CD14-positive monocyte (primary cell): ENCODE measurements at regions of chr12 and their contacts with region 1.

Region 1: GRCh38 chr12:53995378-53996239 is 4.4 kb upstream of the HOXC9 start:
- DNase-seq: no peak
- H3K4me3 ChIP-seq: peak overlapping the region; percentile 32 to 78 (median 38)
- H3K4me3 Mint-ChIP-seq: peak overlapping the region; percentile 83 to 95
- H3K27ac ChIP-seq: no peak overlapping the region
- H3K27ac Mint-ChIP-seq: peak overlapping the region in 1 of 7 donors; percentile 20
- H3K4me1 ChIP-seq: peaks cover 15 to 30% of the 10 kb centered on the region in 2 donors
- H3K4me1 Mint-ChIP-seq: peaks cover 27% of the 10 kb centered on the region
- H3K27me3 ChIP-seq: peaks cover 92 to 100% of the 10 kb centered on the region in 2 donors
- H3K27me3 Mint-ChIP-seq: peaks cover 97 to 100% (median 100%) of the 10 kb centered on the region in 3 donors
- CTCF ChIP-seq: no peak

Region 2: DNA sequence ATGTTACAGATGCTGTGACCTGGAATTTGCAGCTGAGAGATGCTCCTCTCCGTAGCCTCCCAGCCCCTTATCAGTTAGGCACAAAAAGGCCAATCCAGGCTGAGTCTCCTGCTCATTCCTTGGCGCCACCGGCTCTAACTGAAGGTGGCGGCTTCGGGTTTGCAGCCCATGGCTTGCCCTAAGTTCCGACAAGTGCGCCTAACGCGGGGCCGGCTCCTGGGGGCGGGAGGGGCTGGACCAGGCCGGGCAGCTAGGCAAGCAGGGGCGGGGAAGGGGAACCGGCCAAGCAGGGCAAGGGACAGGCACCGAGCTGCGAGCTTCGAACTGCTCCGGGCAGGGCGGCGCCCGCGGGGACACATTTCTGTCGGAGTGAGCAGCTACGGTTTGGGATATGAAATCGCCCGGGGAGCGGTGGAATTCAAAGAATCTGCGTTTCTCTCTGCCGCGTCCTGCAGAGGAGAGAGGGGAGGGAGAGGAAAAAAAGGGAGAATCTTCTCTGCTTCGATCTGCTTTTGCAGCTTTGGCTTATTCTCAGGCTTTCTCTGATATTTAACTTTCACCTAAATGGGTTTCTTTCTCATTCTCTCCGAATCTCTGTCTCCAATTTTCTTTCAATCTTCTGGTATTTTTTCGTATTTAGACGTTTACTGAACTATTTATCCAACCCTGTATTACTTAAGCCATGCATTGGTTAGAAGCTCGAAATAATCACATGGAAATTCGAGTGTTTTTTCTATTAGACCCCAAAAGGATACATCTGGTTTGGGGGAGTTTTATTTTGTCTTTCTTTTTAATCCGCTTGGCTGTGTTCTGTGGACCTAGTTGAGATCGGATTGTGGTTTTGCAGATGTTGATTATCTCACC is 42.5 kb before region 1 on chr12:
- intact Hi-C with region 1: loop called in 1 of 2 experiments (anchors 5 kb)
- DNase-seq: no peak
- H3K4me3 ChIP-seq: no peak overlapping the region
- H3K4me3 Mint-ChIP-seq: peak overlapping the region in 1 of 2 donors; percentile 62
- H3K27ac ChIP-seq: no peak overlapping the region
- H3K27ac Mint-ChIP-seq: peak overlapping the region in 1 of 7 donors; percentile 31
- H3K4me1 ChIP-seq: no peaks in the 10 kb centered on the region
- H3K4me1 Mint-ChIP-seq: peaks cover 6% of the 10 kb centered on the region
- H3K27me3 ChIP-seq: peaks cover 92 to 99% of the 10 kb centered on the region in 2 donors
- H3K27me3 Mint-ChIP-seq: peaks cover 97 to 99% (median 97%) of the 10 kb centered on the region in 3 donors
- CTCF ChIP-seq: no peak

Region 3: GRCh38 chr12:54147186-54147585 is 151.6 kb after region 1 on chr12:
- intact Hi-C with region 1: no loop called
- DNase-seq: no peak
- H3K4me3 ChIP-seq: no peak overlapping the region
- H3K4me3 Mint-ChIP-seq: peak overlapping the region in 1 of 2 donors; percentile 18
- H3K27ac ChIP-seq: no peak overlapping the region
- H3K27ac Mint-ChIP-seq: no peak overlapping the region
- H3K4me1 ChIP-seq: no peaks in the 10 kb centered on the region
- H3K4me1 Mint-ChIP-seq: no peaks in the 10 kb centered on the region
- H3K27me3 ChIP-seq: peaks cover 0 to 73% of the 10 kb centered on the region in 2 donors
- H3K27me3 Mint-ChIP-seq: peaks cover 44 to 80% (median 57%) of the 10 kb centered on the region in 3 donors
- CTCF ChIP-seq: no peak

Region 4: DNA sequence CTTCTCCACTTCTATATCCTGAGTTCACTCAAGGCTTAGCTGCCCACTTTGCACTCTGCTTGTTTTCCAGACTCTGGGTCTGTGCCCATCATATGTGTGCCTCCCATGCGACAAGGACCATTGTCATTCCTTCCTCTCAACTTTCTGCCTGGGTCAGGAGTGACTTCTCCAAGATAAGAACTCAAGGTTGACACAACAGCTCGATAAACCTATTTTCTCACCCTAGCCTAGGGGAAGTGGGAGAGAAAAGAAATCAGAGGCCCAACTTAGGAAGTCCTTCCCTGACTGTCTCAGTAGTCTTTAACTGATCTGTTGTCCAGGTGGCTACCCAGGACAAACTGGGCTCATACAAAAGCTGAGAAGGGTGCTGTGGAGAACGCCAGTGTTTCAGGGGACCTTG is 191.5 kb after region 1 on chr12:
- intact Hi-C with region 1: no loop called
- DNase-seq: no peak
- H3K4me3 ChIP-seq: no peak overlapping the region
- H3K4me3 Mint-ChIP-seq: no peak overlapping the region
- H3K27ac ChIP-seq: no peak overlapping the region
- H3K27ac Mint-ChIP-seq: no peak overlapping the region
- H3K4me1 ChIP-seq: peaks cover 13 to 18% of the 10 kb centered on the region in 2 donors
- H3K4me1 Mint-ChIP-seq: peaks cover 27% of the 10 kb centered on the region
- H3K27me3 ChIP-seq: peaks cover 0 to 11% of the 10 kb centered on the region in 2 donors
- H3K27me3 Mint-ChIP-seq: peaks cover 6 to 18% (median 10%) of the 10 kb centered on the region in 3 donors
- CTCF ChIP-seq: no peak